ENCODE measurements at regions of chr6 and their contacts with region 1.

Region 1: GRCh38 chr6:28399350-28400121 is at the start of gene ZSCAN12:
- DNase-seq: peak; percentile 92
- ATAC-seq: peak; percentile 91
- H3K4me3 Mint-ChIP-seq: peak within 1 kb of the TSS; percentile 89
- H3K27ac Mint-ChIP-seq: peak within 1 kb of the TSS; percentile 92
- H3K4me1 Mint-ChIP-seq: peaks cover 42% of the 10 kb centered on the region
- H3K27me3 Mint-ChIP-seq: peaks cover 15% of the 10 kb centered on the region
- total RNA-seq, gene ZSCAN12: 6.9 to 7.6 TPM

Region 2: DNA sequence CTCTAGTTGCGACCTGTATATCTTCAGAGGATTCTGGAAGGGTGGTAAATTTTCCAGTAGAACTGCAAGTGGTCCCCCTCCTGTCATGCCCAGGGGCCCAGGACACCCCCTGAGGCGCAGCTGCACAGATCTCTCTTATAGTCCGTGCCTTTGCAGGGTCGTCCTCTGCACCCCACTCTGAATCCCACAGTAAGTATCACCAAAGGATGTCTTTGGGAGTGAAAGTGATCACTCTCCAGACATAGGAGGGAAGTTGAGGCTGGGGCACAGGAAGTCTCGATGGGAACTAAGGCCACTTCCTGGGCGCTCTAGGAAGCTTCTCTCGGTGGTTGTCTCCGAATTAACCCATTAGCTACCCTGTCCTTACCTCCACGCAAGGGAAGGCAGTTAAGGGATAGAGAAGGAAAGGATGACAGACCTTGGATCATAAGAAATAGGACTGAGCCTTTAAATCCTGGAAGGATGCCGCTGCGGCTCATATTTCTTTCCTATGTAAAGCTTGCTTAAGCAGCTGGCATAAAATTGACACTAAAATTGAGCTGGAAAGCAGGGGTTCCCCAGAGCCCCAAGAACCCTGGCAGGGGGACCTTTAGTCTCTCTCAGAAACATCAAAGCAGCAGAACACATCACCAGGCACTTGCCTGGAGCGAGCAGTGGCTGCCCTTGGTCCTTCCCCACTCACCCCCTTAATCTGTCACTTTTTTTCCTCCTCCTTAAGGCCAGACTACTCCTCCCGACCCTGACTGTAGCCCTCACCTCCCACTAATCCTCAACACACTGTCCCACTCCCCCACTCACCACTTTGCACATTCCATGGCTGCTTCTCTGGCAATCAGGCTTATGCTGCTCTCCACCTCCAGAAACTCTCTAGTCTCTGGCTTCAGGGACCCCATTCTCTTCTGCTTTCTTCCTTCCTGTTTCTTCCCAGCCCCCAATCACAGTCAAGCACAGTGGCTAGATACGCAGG is 147.2 kb before region 1 on chr6 and contains the start of gene ZKSCAN4:
- CTCF ChIA-PET with region 1: no interaction called
- POLR2A ChIA-PET with region 1: no interaction called
- intact Hi-C with region 1: loop called in 1 of 2 experiments (anchors 1 kb)
- DNase-seq: peak; percentile 85
- ATAC-seq: peak; percentile 83
- H3K4me3 Mint-ChIP-seq: peak within 1 kb of the TSS; percentile 99
- H3K27ac Mint-ChIP-seq: peak within 1 kb of the TSS; percentile 96
- H3K4me1 Mint-ChIP-seq: peaks cover 14% of the 10 kb centered on the region
- H3K27me3 Mint-ChIP-seq: peaks cover 1% of the 10 kb centered on the region
- total RNA-seq, gene ZKSCAN4: 3.2 to 4.1 TPM

Region 3: GRCh38 chr6:28303570-28303969 is 96.0 kb before region 1 on chr6:
- CTCF ChIA-PET with region 1: no interaction called
- POLR2A ChIA-PET with region 1: no interaction called
- intact Hi-C with region 1: no loop called
- DNase-seq: no peak
- ATAC-seq: peak; percentile 49
- H3K4me3 Mint-ChIP-seq: no peak overlapping the region
- H3K27ac Mint-ChIP-seq: no peak overlapping the region
- H3K4me1 Mint-ChIP-seq: peaks cover 18% of the 10 kb centered on the region
- H3K27me3 Mint-ChIP-seq: no peaks in the 10 kb centered on the region

Region 4: DNA sequence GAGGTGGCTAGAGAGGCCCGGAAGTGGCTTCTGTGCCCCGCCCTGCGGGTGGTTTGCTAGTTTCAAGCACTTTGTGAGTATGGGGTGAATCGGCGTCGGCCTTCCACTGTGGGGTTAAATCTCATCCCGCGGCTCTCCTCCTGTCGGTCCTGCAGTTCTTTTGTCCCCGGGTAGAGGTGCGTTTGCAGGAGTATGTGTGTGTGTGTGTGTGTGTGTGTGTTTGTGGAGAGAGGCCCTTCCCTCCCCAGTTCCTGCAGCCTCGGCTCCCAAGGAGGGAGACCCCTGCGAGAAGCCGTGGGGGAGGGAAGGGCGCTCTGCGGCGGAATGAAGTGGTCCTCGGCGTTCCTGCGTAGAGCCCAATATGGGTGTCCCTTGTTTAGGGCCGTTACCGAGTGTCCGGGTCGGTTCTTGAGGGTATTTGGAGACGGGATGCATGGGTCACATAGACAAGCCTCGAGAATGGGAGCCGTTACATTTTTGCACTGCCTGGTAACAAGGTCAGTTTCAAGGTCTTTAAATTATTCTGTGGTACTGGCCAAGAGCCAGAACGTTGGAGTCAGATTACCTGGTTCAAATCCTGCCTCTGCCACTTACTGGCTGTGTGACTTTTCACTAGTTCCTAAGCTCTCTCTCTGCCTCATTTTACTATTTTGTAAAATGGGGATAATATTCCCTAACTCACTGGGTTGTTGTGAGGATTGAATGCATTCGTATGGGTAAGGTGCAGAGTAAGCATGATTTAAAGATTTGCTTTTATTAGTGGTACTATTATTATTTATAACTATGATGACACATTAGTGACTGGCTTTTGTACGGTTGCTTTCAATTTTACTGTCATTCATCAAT is 49.4 kb before region 1 on chr6 and contains the start of gene ZKSCAN3:
- CTCF ChIA-PET with region 1: interaction called, 3 read pairs
- POLR2A ChIA-PET with region 1: no interaction called
- intact Hi-C with region 1: loop called in 1 of 2 experiments (anchors 1 kb)
- DNase-seq: peak; percentile 94
- ATAC-seq: peak; percentile 100
- H3K4me3 Mint-ChIP-seq: peak within 1 kb of the TSS; percentile 96
- H3K27ac Mint-ChIP-seq: peak within 1 kb of the TSS; percentile 93
- H3K4me1 Mint-ChIP-seq: peaks cover 22% of the 10 kb centered on the region
- H3K27me3 Mint-ChIP-seq: peaks cover 7% of the 10 kb centered on the region
- total RNA-seq, gene ZKSCAN3: 2.2 to 3.1 TPM

Region 5: DNA sequence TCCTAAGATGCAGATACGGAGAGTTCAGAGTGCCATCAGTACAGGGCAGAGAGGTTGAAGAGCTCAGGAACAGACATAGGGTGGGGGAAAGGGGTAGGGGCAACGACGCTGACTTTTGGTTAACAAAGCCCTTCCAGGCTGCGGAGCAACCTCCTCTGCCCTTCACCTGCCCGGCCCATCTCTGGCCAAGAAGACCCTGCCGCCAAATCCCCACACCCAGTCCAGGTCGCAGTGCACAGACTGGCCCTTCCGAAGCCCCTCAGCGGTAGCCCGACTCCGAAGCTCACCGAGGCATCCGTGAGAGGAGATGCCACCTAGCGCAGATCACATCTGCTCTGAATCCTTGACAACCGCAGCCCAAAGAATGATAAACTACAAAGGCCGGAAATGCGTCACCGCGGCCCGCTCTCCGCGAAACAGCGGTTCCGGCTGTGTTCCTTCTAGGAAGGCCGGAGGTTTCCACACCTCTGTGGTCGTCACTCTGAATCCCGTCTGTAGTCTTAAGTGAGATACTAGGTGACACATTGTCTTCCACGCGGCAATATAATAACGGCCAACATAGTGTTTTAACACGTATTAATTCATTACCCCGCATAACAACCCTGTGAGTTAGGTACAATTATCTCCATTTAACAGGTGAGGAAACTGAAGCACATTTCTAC is 43.7 kb after region 1 on chr6 and contains the start of gene ZSCAN23:
- CTCF ChIA-PET with region 1: no interaction called
- POLR2A ChIA-PET with region 1: no interaction called
- intact Hi-C with region 1: loop called (anchors 1 kb)
- DNase-seq: peak; percentile 91
- ATAC-seq: peak; percentile 92
- H3K4me3 Mint-ChIP-seq: peak within 1 kb of the TSS; percentile 96
- H3K27ac Mint-ChIP-seq: peak within 1 kb of the TSS; percentile 91
- H3K4me1 Mint-ChIP-seq: peaks cover 32% of the 10 kb centered on the region
- H3K27me3 Mint-ChIP-seq: peaks cover 16% of the 10 kb centered on the region
- total RNA-seq, gene ZSCAN23: 1.9 to 2.9 TPM

Region 6: DNA sequence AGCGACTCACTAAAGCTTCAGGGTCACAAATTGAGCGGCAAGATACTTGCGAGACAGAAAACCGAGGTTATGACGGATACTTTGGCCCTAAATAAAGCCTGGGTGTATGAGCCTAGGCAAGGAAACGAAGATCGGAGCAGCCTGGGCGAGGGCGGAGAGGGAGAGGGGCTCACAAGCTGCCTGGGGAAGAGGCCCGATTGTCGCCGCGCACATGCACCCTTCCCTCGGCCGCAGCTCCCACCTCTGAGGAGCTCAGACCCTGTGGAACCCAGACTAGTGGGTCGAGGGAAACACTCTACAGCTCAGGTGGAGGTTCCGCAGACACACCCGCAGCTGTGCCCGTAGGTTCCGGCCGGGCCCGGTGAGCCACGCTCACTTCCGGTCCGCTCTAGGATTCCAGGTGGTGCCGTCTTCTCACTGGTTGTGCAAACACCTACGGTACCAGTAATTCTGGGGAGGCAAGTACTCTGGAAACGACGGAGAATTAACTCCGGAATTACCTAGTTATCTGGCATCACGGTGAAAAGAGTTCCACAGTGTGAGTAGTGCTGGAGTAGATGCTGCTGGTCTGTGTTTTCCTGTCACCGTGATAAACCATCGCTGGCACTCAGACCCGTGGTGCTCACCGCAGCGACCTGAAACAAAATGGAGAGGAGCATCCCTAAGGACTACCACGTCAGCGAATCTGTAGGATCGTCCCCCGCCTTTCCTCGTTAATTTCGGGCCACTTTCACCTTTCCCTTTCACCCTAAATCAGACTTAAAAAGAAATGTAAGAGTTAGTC is 187.6 kb after region 1 on chr6:
- CTCF ChIA-PET with region 1: no interaction called
- POLR2A ChIA-PET with region 1: no interaction called
- intact Hi-C with region 1: loop called (anchors 2 to 5 kb)
- DNase-seq: peak; percentile 83
- ATAC-seq: peak; percentile 87
- H3K4me3 Mint-ChIP-seq: peak overlapping the region; percentile 84
- H3K27ac Mint-ChIP-seq: peak overlapping the region; percentile 64
- H3K4me1 Mint-ChIP-seq: peaks cover 34% of the 10 kb centered on the region
- H3K27me3 Mint-ChIP-seq: peaks cover 55% of the 10 kb centered on the region

Region 7: DNA sequence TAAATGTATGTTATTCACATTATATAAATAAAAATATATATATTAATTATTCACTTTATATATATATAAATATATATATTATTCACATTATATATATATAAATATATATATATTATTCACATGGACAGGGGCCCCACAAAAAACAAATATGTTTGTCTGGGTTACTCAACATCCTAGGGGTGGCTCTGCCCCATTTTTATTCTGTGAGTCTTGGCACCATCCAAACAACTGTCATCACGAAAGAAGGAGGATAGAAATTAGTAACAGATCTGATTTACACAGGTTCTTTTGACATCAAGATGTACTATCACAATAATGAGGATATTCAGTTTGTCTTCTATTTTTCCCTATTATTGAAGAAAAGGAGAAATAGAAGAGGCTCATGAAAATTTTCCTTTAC is 313.4 kb after region 1 on chr6:
- CTCF ChIA-PET with region 1: no interaction called
- POLR2A ChIA-PET with region 1: no interaction called
- intact Hi-C with region 1: no loop called
- DNase-seq: no peak
- ATAC-seq: peak; percentile 35
- H3K4me3 Mint-ChIP-seq: no peak overlapping the region
- H3K27ac Mint-ChIP-seq: no peak overlapping the region
- H3K4me1 Mint-ChIP-seq: peaks cover 4% of the 10 kb centered on the region
- H3K27me3 Mint-ChIP-seq: peaks cover 49% of the 10 kb centered on the region